CD14-positive monocyte (primary cell): ENCODE measurements at regions of chr13 and their contacts with region 1.

Region 1: DNA sequence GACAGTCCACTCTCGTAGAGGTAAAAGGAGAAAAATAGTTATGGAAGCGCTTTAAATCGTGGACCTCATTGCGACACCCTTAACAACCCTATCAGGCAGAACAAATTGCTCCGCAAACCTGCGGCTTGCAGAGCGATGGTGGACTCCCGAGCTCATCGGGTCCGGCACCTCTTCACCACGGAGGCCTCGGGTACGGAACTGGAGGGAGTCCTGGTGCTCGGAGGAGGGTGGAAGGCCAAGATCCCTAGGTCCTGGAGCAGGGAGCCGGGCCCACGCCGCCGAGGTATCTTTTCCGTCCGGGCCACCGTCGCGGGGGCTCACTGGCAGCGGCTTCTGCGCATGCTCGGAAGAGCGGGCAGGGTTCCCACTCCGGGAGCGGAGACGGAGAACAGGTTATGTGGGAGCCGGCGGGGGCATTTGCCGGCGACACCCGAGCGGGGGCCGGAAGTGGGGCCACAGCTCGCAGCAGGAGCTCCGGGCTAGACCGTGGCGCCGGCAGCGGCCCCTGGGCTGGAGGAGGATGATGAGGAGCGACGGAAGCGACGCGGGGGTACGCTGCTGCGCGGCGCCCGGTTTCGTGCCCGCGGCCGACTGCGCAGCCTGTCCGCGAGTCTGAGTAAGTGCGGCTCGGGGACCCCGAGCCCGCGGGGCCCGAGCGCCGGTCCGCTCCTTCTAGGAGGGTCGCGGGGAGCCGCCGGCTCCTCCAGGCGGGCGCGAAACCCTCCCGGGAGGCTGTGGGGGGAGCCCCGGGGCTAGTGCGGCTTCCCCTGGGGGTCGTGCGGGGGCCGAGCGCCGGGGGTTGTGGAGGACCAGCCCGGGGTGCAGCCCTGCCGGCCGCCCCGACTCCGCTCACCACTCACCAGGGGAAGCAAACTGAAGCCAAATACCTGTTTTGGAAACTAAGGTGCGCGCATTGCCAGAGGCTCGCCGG is at the start of gene ABHD13:
- DNase-seq: peak; percentile 80 to 89 (median 83)
- H3K4me3 ChIP-seq: peak within 1 kb of the TSS; percentile 81 to 96 (median 85)
- H3K4me3 Mint-ChIP-seq: peak within 1 kb of the TSS; percentile 95 to 96
- H3K27ac ChIP-seq: peak within 1 kb of the TSS; percentile 52 to 92
- H3K27ac Mint-ChIP-seq: peak within 1 kb of the TSS; percentile 84 to 97 (median 95)
- H3K4me1 ChIP-seq: peaks cover 37 to 47% of the 10 kb centered on the region in 2 donors
- H3K4me1 Mint-ChIP-seq: peaks cover 40% of the 10 kb centered on the region
- H3K27me3 ChIP-seq: no peaks in the 10 kb centered on the region
- H3K27me3 Mint-ChIP-seq: peaks cover 0 to 1% (median 0%) of the 10 kb centered on the region in 3 donors
- CTCF ChIP-seq: no peak
- polyA plus RNA-seq, gene ABHD13: 6.8 to 20.7 (median 18.6) TPM

Region 2: GRCh38 chr13:108269601-108270328 is 51.5 kb after region 1 on chr13 and contains the start of gene TNFSF13B:
- intact Hi-C with region 1: loop called (anchors 2 to 5 kb)
- DNase-seq: peak; percentile 76 to 86 (median 85)
- H3K4me3 ChIP-seq: peak within 1 kb of the TSS; percentile 73 to 98 (median 85)
- H3K4me3 Mint-ChIP-seq: peak within 1 kb of the TSS; percentile 91 to 98
- H3K27ac ChIP-seq: peak within 1 kb of the TSS; percentile 82 to 99
- H3K27ac Mint-ChIP-seq: peak within 1 kb of the TSS; percentile 96 to 100 (median 99)
- H3K4me1 ChIP-seq: peaks cover 54 to 70% of the 10 kb centered on the region in 2 donors
- H3K4me1 Mint-ChIP-seq: peaks cover 62% of the 10 kb centered on the region
- H3K27me3 ChIP-seq: no peaks in the 10 kb centered on the region
- H3K27me3 Mint-ChIP-seq: no peaks in the 10 kb centered on the region
- CTCF ChIP-seq: no peak
- polyA plus RNA-seq, gene TNFSF13B: 117 to 587 (median 558) TPM

Region 3: GRCh38 chr13:108342369-108343289 is 124.3 kb after region 1 on chr13:
- intact Hi-C with region 1: no loop called
- DNase-seq: peak; percentile 19 to 51 (median 28)
- H3K4me3 ChIP-seq: peak overlapping the region in 2 of 3 experiments; percentile 9 to 28
- H3K4me3 Mint-ChIP-seq: peak overlapping the region in 1 of 2 donors; percentile 74
- H3K27ac ChIP-seq: peak overlapping the region in 1 of 2 donors; percentile 39
- H3K27ac Mint-ChIP-seq: peak overlapping the region; percentile 25 to 90 (median 79)
- H3K4me1 ChIP-seq: peaks cover 13 to 21% of the 10 kb centered on the region in 2 donors
- H3K4me1 Mint-ChIP-seq: peaks cover 18% of the 10 kb centered on the region
- H3K27me3 ChIP-seq: no peaks in the 10 kb centered on the region
- H3K27me3 Mint-ChIP-seq: peaks cover 0 to 1% (median 0%) of the 10 kb centered on the region in 3 donors
- CTCF ChIP-seq: peak; percentile 49

Region 4: GRCh38 chr13:108470921-108471320 is 252.6 kb after region 1 on chr13:
- intact Hi-C with region 1: no loop called
- DNase-seq: no peak
- H3K4me3 ChIP-seq: no peak overlapping the region
- H3K4me3 Mint-ChIP-seq: no peak overlapping the region
- H3K27ac ChIP-seq: no peak overlapping the region
- H3K27ac Mint-ChIP-seq: no peak overlapping the region
- H3K4me1 ChIP-seq: no peaks in the 10 kb centered on the region
- H3K4me1 Mint-ChIP-seq: no peaks in the 10 kb centered on the region
- H3K27me3 ChIP-seq: no peaks in the 10 kb centered on the region
- H3K27me3 Mint-ChIP-seq: peaks cover 1 to 3% (median 2%) of the 10 kb centered on the region in 3 donors
- CTCF ChIP-seq: no peak

Region 5: DNA sequence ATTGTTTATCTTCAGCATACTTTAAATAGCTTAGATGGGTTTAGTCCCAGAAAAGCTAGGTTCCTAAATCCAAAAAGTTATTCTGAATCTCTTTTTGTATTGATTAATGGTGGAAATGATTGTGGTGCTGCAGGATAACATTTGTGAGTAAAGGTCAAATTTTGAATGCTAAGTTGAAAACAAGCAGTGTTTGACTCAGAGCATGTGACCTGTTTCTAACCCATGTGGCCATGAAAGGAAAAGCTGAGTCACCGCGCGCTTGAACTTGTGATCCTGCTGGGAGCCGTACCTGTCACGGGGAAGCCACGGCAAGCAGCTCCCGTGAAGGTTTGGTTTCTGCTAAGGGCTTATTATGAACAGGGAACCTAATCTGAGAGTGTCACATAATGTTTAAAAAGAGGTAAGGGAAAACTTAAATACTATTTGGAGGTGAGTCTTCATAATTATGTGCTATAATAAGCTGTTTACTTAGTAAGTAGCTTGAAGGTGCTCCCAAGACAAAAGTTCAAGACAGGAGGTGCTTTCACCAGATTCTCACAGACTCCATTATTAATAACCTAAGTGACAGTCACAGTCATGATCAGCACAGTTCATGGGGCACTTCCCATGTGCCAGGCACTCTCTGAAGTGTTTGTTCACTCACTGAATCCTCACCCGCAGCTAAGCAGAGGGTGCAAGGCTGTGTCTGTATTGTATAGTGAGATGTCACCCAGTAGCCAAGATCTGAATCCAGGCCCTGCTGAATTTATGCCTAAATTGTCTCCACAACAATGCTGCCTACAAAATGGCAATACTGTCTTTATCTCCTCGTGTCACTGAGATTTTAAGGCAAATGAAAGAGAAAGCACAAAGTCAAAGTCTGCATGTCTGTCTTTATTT is 697.6 kb after region 1 on chr13:
- intact Hi-C with region 1: loop called in 1 of 2 experiments (anchors 10 kb)
- DNase-seq: peak; percentile 62 to 91 (median 77)
- H3K4me3 ChIP-seq: peak overlapping the region in 2 of 3 experiments; percentile 32 to 39
- H3K4me3 Mint-ChIP-seq: peak overlapping the region; percentile 67 to 94
- H3K27ac ChIP-seq: peak overlapping the region in 1 of 2 donors; percentile 15
- H3K27ac Mint-ChIP-seq: peak overlapping the region in 6 of 7 donors; percentile 40 to 91 (median 78)
- H3K4me1 ChIP-seq: peaks cover 12 to 14% of the 10 kb centered on the region in 2 donors
- H3K4me1 Mint-ChIP-seq: peaks cover 15% of the 10 kb centered on the region
- H3K27me3 ChIP-seq: no peaks in the 10 kb centered on the region
- H3K27me3 Mint-ChIP-seq: peaks cover 1 to 6% (median 2%) of the 10 kb centered on the region in 3 donors
- CTCF ChIP-seq: no peak